CD4-positive, alpha-beta memory T cell (primary cell): ENCODE measurements at regions of chr6 and their contacts with region 1.

Region 1: DNA sequence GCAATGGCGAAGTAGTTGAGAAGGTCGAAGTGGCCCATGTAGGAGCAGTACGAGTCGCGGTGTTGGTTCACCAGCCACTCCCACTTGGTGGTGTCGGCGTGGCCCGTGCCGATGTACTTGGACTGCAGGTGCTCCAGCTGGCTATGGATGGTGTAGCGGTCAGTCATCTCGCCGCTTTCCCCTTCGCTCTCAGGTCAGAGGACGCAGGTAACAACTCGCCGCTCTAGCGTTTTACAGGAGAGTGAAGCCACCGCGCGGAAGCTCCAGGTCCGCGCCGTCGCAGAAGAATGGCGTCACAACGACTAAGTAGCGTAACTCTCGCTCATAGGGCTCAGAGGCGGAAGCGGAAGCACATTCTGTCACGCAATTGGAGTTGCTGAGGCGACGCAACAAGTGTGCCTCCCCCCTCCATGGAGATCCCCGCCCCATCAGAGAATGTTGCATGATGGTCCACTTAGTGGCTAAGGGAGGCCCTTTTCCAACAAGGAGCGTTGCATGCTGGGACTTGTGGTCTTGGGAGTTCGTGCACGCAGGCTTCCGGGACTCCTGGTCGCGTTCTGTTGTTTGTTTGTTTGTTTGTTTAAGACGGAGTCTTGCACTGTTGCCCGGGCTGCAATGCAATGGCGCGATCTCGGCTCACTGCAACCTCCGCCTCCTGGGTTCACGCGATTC is at the start of gene SF3B5:
- DNase-seq: peak; percentile 96 to 100 (median 98)
- H3K4me3 ChIP-seq: peak within 1 kb of the TSS; percentile 88 to 95
- H3K4me3 Mint-ChIP-seq: peak within 1 kb of the TSS; percentile 94 to 99 (median 98)
- H3K27ac ChIP-seq: peak within 1 kb of the TSS; percentile 91
- H3K27ac Mint-ChIP-seq: peak within 1 kb of the TSS; percentile 96 to 100 (median 99)
- H3K4me1 ChIP-seq: peaks cover 17% of the 10 kb centered on the region
- H3K4me1 Mint-ChIP-seq: peaks cover 15 to 35% (median 24%) of the 10 kb centered on the region in 4 donors
- H3K27me3 ChIP-seq: no peaks in the 10 kb centered on the region
- H3K27me3 Mint-ChIP-seq: no peaks in the 10 kb centered on the region
- total RNA-seq, gene SF3B5: 87.2 to 91.7 TPM

Region 2: GRCh38 chr6:142146828-142147662 is 1948.4 kb before region 1 on chr6 and contains the starts of genes NMBR and VTA1:
- CTCF ChIA-PET with region 1: no interaction called
- POLR2A ChIA-PET with region 1: no interaction called
- intact Hi-C with region 1: loop called (anchors 10 kb)
- DNase-seq: peak; percentile 97 to 98 (median 98)
- H3K4me3 ChIP-seq: peak within 1 kb of the TSS; percentile 86 to 100
- H3K4me3 Mint-ChIP-seq: peak within 1 kb of the TSS; percentile 81 to 97 (median 94)
- H3K27ac ChIP-seq: peak within 1 kb of the TSS; percentile 73
- H3K27ac Mint-ChIP-seq: peak within 1 kb of the TSS; percentile 83 to 96 (median 94)
- H3K4me1 ChIP-seq: peaks cover 39% of the 10 kb centered on the region
- H3K4me1 Mint-ChIP-seq: peaks cover 46 to 61% (median 53%) of the 10 kb centered on the region in 4 donors
- H3K27me3 ChIP-seq: no peaks in the 10 kb centered on the region
- H3K27me3 Mint-ChIP-seq: no peaks in the 10 kb centered on the region
- total RNA-seq, gene NMBR: not detected
- total RNA-seq, gene VTA1: 31.2 to 31.4 TPM

Region 3: DNA sequence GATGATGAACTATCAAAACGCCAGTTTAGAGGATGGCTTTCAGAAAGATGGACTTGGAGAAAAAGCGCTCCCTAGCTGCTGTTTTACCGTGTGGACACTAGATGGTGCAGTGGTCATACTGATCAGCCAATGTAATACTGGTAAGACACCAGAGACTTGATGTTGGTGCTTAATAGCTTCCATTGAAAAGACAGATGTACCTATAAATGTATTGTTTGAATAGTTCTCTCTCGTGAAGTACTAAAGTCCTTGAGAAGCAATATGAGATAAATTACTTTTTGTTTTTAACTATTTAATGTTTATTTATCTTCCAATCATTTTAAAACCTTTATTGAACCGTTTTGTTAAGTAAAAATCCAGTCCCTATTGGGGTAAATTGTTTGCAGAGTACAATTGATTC is 520.0 kb before region 1 on chr6:
- CTCF ChIA-PET with region 1: interaction called, 3 read pairs
- POLR2A ChIA-PET with region 1: no interaction called
- intact Hi-C with region 1: loop called (anchors 5 kb)
- DNase-seq: peak; percentile 54 to 72 (median 68)
- H3K4me3 ChIP-seq: no peak overlapping the region
- H3K4me3 Mint-ChIP-seq: no peak overlapping the region
- H3K27ac ChIP-seq: no peak overlapping the region
- H3K27ac Mint-ChIP-seq: peak overlapping the region in 4 of 7 donors; percentile 22 to 43 (median 32)
- H3K4me1 ChIP-seq: no peaks in the 10 kb centered on the region
- H3K4me1 Mint-ChIP-seq: peaks cover 11 to 35% (median 19%) of the 10 kb centered on the region in 4 donors
- H3K27me3 ChIP-seq: no peaks in the 10 kb centered on the region
- H3K27me3 Mint-ChIP-seq: no peaks in the 10 kb centered on the region

Region 4: GRCh38 chr6:143822584-143823024 is 272.9 kb before region 1 on chr6:
- CTCF ChIA-PET with region 1: no interaction called
- POLR2A ChIA-PET with region 1: no interaction called
- intact Hi-C with region 1: no loop called
- DNase-seq: no peak
- H3K4me3 ChIP-seq: no peak overlapping the region
- H3K4me3 Mint-ChIP-seq: no peak overlapping the region
- H3K27ac ChIP-seq: no peak overlapping the region
- H3K27ac Mint-ChIP-seq: peak overlapping the region in 1 of 7 donors; percentile 9
- H3K4me1 ChIP-seq: no peaks in the 10 kb centered on the region
- H3K4me1 Mint-ChIP-seq: peaks cover 0 to 1% (median under 1%) of the 10 kb centered on the region in 4 donors
- H3K27me3 ChIP-seq: no peaks in the 10 kb centered on the region
- H3K27me3 Mint-ChIP-seq: no peaks in the 10 kb centered on the region

Region 5: GRCh38 chr6:143940011-143940597 is 155.4 kb before region 1 on chr6:
- CTCF ChIA-PET with region 1: interaction called, 13 read pairs
- POLR2A ChIA-PET with region 1: no interaction called
- intact Hi-C with region 1: loop called (anchors 2 kb)
- DNase-seq: peak; percentile 55 to 66 (median 58)
- H3K4me3 ChIP-seq: no peak overlapping the region
- H3K4me3 Mint-ChIP-seq: no peak overlapping the region
- H3K27ac ChIP-seq: no peak overlapping the region
- H3K27ac Mint-ChIP-seq: no peak overlapping the region
- H3K4me1 ChIP-seq: no peaks in the 10 kb centered on the region
- H3K4me1 Mint-ChIP-seq: peaks cover 4 to 7% (median 6%) of the 10 kb centered on the region in 4 donors
- H3K27me3 ChIP-seq: no peaks in the 10 kb centered on the region
- H3K27me3 Mint-ChIP-seq: peaks cover 4 to 5% of the 10 kb centered on the region in 2 donors

Region 6: DNA sequence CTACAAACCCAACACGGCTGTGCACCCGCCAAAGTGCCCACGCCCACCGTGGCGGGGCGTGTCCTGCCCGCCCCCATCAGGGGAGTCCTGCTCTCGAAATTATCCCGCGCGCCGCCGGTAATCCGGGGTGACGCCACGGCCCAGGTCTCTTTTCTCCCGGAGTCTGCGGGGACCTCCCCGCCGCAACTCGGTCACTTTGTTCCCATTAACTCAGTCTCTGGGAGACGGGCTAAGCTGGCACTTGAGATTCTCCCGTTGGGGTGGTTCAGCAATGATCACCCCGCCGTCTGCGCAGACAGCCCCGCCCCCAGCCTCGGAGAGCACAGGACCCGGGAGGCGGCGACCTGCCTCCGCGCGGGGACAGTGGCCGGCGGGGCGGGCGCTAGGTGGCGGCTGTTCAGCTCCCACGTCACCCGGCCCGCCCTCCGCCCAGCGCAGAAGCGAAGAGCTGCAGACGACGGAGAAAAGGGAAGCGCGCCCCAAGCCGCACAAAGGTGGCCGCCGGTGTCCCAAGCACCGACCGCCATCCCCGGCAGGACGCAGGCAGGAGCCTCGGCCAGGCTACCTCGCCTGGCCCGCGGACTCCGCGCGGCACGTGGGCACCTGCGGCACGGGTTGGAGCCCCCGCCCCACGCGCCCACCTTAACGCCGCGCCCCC is 31.6 kb before region 1 on chr6:
- CTCF ChIA-PET with region 1: interaction called, 4 read pairs
- POLR2A ChIA-PET with region 1: interaction called, 82 read pairs
- intact Hi-C with region 1: loop called (anchors 1 kb)
- DNase-seq: peak; percentile 90 to 92 (median 91)
- H3K4me3 ChIP-seq: peak overlapping the region; percentile 38 to 91
- H3K4me3 Mint-ChIP-seq: peak overlapping the region; percentile 90 to 95 (median 93)
- H3K27ac ChIP-seq: peak overlapping the region; percentile 88
- H3K27ac Mint-ChIP-seq: peak overlapping the region; percentile 91 to 97 (median 96)
- H3K4me1 ChIP-seq: peaks cover 20% of the 10 kb centered on the region
- H3K4me1 Mint-ChIP-seq: peaks cover 21 to 36% (median 28%) of the 10 kb centered on the region in 4 donors
- H3K27me3 ChIP-seq: no peaks in the 10 kb centered on the region
- H3K27me3 Mint-ChIP-seq: no peaks in the 10 kb centered on the region

Region 7: DNA sequence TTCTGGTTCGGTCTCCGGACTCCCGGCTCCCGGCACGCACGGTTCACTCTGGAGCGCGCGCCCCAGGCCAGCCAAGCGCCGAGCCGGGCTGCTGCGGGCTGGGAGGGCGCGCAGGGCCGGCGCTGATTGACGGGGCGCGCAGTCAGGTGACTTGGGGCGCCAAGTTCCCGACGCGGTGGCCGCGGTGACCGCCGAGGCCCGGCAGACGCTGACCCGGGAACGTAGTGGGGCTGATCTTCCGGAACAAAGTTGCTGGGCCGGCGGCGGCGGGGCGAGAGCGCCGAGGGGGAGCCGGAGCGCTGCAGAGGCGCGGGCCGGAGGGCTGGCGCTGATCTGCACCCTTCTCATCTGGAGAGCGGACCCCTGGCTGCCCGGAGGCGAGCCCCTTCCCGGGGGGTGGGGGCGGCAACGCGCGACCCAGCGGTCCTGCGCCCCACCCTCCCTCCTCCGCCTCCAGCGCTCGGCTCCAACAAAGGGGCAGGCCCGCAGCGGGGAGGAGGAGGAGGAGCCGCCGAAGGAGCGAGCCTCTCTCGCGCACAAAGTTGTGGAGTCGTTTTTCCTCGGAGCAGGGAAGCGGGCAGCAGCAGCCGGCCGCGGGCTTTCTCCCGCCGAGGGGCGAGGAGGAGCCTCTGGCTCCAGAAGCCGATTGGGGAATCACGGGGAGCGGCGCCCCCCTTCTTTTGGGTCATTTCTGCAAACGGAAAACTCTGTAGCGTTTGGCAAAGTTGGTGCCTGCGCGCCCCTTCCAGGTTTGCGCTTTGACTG is 189.5 kb after region 1 on chr6 and contains the start of gene UTRN:
- CTCF ChIA-PET with region 1: no interaction called
- POLR2A ChIA-PET with region 1: no interaction called
- intact Hi-C with region 1: loop called (anchors 5 kb)
- DNase-seq: peak; percentile 18 to 40 (median 30)
- H3K4me3 ChIP-seq: peak within 1 kb of the TSS; percentile 65 to 89
- H3K4me3 Mint-ChIP-seq: peak within 1 kb of the TSS; percentile 88 to 98 (median 96)
- H3K27ac ChIP-seq: peak within 1 kb of the TSS; percentile 10
- H3K27ac Mint-ChIP-seq: peak within 1 kb of the TSS; percentile 53 to 86 (median 68)
- H3K4me1 ChIP-seq: peaks cover 20% of the 10 kb centered on the region
- H3K4me1 Mint-ChIP-seq: peaks cover 9 to 23% (median 18%) of the 10 kb centered on the region in 4 donors
- H3K27me3 ChIP-seq: no peaks in the 10 kb centered on the region
- H3K27me3 Mint-ChIP-seq: no peaks in the 10 kb centered on the region
- total RNA-seq, gene UTRN: 219 to 227 TPM

Region 8: DNA sequence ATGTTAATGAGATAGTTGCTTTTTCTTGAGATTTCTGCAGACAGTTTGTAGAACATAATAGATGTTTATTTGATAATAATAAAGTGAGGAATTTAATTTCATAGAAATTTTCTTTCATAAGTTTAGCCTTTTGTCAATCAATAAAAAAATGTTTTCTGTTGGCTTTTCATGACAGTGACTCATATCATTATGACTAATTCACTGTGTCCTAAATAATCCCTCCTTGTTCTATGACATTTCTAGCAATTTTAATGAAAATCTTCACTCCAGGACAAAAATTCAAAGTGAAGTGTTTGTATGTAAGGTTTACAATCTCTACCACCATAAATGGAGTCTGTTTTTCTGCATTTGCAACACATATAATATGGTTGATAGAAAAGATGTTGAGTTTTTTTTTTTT is 299.5 kb after region 1 on chr6:
- CTCF ChIA-PET with region 1: no interaction called
- POLR2A ChIA-PET with region 1: no interaction called
- intact Hi-C with region 1: no loop called
- DNase-seq: no peak
- H3K4me3 ChIP-seq: no peak overlapping the region
- H3K4me3 Mint-ChIP-seq: no peak overlapping the region
- H3K27ac ChIP-seq: no peak overlapping the region
- H3K27ac Mint-ChIP-seq: no peak overlapping the region
- H3K4me1 ChIP-seq: peaks cover 31% of the 10 kb centered on the region
- H3K4me1 Mint-ChIP-seq: peaks cover 39 to 76% (median 59%) of the 10 kb centered on the region in 4 donors
- H3K27me3 ChIP-seq: no peaks in the 10 kb centered on the region
- H3K27me3 Mint-ChIP-seq: no peaks in the 10 kb centered on the region

Region 9: DNA sequence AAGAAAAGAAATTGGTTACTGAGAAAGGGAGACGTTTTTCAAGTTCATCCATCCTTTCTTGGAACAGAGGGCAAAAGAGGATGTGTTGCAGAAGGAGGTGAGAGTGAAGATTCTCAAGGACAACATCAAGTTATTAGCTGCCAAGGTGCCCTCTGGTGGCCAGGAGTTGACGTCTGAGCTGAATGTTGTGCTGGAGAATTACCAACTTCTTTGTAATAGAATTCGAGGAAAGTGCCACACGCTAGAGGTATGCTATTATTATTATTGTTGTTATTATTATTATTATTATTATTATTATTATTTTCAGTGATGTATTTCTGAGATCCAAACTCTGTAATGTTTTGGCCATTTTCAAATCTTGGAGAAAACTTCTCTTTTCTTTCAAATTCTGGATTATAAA is 386.7 kb after region 1 on chr6:
- CTCF ChIA-PET with region 1: interaction called, 12 read pairs
- POLR2A ChIA-PET with region 1: no interaction called
- intact Hi-C with region 1: no loop called
- DNase-seq: peak; percentile 58 to 74 (median 60)
- H3K4me3 ChIP-seq: no peak overlapping the region
- H3K4me3 Mint-ChIP-seq: no peak overlapping the region
- H3K27ac ChIP-seq: no peak overlapping the region
- H3K27ac Mint-ChIP-seq: peak overlapping the region in 5 of 7 donors; percentile 18 to 62 (median 23)
- H3K4me1 ChIP-seq: no peaks in the 10 kb centered on the region
- H3K4me1 Mint-ChIP-seq: peaks cover 0 to 12% (median 3%) of the 10 kb centered on the region in 4 donors
- H3K27me3 ChIP-seq: no peaks in the 10 kb centered on the region
- H3K27me3 Mint-ChIP-seq: no peaks in the 10 kb centered on the region